ENCODE measurements at regions of chr1 and their contacts with region 1.

Region 1: DNA sequence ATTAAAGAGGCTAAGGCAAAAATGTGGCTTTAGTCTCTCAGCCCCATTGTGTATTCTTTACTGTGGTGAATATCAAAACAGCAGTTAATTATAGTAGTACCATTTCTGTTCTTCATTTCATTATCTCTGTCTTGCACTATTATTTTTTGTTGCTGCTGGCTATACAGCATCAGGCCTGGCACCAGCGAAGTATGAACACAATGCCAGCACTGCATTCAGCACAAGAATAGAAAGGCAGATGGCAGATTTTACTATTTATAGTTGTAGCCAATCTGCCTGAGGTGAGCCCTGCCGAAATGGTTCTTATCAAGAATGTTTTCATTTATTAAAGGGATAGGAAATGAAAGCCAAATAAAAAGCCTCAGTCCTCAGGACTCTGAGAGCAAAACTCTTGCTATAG is 72.1 kb downstream of the GPR52 start:
- DNase-seq: no peak

Region 2: DNA sequence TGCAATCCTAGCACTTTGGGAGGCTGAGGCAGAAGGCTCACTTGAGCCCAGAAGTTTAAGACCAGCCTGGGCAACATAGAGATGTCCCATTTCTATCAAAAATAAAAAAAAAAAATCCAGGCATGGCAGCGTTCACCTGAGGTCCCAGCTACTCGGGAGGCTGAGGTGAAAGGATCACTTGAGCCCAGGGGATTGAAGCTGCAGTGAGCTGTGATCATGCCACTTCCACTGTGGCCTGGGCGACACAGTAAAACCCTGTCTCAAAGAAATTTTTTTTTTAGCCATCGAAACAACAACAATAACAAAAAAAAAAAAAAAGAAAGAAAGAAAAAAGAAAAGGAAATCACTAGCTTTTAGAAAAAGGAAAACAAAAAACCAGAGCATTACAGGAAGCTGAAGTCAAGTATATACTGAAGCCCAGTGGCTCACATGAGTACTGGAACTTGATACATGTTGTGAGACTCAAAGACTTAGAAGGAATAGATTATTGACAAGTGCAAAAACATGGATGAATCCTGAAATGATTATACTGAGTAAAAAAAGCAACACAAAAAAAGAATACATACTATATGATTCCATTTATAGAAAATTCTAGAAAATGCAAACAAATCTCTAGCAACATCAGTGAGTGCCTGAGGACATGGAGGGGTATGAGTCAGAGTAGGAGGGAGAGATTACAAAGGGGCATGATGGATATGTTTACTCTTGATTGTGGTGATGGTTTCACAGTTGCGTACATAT is 366.6 kb before region 1 on chr1:
- intact Hi-C with region 1: no loop called
- DNase-seq: no peak

Region 3: GRCh38 chr1:175656416-175656815 is 1136.6 kb after region 1 on chr1:
- intact Hi-C with region 1: loop called in 1 of 2 experiments (anchors 10 kb)
- DNase-seq: no peak

Measured in posterior vena cava (tissue), 2 donors.